HAP-1 (cell line): ENCODE measurements at regions of chr11 and their contacts with region 1.

Region 1: DNA sequence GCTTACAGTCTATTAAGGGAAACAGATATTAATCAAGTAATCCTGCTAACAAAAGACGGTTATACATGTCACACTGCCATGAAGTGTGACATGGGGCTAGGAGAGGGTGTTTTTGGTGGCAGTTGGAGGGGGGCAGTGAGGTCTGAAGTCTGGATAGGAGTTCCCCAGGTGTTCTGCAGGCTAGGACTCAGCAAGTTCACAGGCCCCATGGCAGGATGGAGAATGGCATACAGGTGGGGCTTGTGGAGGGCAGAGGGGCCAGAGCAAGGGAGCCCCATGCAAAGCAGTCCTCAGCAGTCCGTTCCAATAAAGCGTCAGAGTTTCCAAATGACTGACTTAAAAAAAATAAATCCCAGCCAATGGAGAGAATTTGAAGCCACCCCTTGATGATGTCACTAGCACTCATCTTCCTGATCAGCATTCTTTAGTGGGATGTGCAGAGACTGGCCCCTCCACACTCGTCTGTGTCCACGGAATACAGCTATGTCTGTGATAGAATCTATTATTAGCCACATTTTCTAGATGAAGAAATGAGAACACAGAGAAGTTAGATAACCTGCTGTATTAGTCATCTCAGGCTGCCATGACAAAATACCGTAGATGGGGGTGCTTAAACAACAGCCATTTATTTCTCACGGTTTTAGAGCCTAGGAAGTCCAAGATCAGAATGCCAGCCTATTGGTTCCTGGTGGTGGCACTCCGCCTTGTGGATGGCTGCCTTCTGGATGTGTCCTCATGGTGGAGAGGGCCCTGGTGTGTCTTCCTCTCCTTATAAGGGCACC is 32.6 kb downstream of the PRDM11 start:
- DNase-seq: no peak
- H3K4me3 ChIP-seq: no peak overlapping the region
- H3K4me1 ChIP-seq: peaks cover 2% of the 10 kb centered on the region; the same call in 1 of the 2 replicates
- H3K27me3 ChIP-seq: peaks cover 2% of the 10 kb centered on the region; the same call in 1 of the 2 replicates

Region 2: DNA sequence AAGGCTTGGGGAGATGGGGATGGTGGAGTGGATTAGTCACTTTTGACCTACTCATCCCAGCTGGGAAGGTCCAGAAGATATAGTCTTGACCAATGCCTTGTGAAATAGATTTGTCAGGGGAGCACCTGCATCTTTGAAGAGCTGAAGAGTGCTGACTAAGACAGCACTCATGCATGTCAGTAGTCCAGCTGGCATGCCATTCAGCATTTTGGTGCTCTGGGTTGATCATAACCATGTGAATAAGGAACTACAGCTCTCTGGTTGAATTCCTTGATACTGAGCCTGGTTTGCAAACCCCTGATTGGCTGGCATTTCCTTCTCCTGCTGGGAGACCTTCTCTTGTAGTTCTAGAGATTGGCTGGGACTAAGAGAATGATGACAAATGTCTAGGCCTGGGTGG is 762.3 kb before region 1 on chr11:
- in situ Hi-C with region 1: no loop called
- DNase-seq: no peak
- H3K4me3 ChIP-seq: no peak overlapping the region
- H3K4me1 ChIP-seq: no peaks in the 10 kb centered on the region
- H3K27me3 ChIP-seq: peaks cover 3% of the 10 kb centered on the region; the same call in 1 of the 2 replicates

Region 3: GRCh38 chr11:45233121-45233803 is 54.2 kb after region 1 on chr11:
- in situ Hi-C with region 1: loop called (anchors 10 kb)
- DNase-seq: peak; percentile 34 to 83
- H3K4me3 ChIP-seq: no peak overlapping the region
- H3K4me1 ChIP-seq: no peaks in the 10 kb centered on the region
- H3K27me3 ChIP-seq: 0 out of 2 replicates have a peak, but pooled peaks cover 2% of the 10 kb centered on the region

Region 4: DNA sequence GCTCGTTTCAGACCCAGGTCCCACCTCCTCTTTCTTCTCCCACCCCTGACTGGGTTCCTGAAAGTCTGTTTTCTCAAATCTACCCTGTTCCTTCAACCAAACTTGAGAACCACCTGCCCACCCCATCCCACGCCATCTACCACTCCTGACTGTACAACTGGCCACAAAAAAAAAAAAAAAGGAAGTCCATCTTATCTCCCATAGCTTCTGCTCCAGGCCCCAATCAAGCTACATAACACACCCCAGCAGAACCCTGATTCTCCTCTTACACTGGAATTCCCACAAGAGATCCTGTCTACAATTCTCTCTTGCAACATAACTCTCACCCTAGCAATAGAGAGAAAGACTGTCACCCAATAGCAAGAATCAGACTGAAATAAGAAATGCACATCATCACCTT is 525.6 kb after region 1 on chr11:
- in situ Hi-C with region 1: no loop called
- DNase-seq: no peak
- H3K4me3 ChIP-seq: no peak overlapping the region
- H3K4me1 ChIP-seq: no peaks in the 10 kb centered on the region
- H3K27me3 ChIP-seq: peaks cover 15% of the 10 kb centered on the region